Panc1 (cell line): ENCODE measurements at regions of chr19 and their contacts with region 1.

Region 1: DNA sequence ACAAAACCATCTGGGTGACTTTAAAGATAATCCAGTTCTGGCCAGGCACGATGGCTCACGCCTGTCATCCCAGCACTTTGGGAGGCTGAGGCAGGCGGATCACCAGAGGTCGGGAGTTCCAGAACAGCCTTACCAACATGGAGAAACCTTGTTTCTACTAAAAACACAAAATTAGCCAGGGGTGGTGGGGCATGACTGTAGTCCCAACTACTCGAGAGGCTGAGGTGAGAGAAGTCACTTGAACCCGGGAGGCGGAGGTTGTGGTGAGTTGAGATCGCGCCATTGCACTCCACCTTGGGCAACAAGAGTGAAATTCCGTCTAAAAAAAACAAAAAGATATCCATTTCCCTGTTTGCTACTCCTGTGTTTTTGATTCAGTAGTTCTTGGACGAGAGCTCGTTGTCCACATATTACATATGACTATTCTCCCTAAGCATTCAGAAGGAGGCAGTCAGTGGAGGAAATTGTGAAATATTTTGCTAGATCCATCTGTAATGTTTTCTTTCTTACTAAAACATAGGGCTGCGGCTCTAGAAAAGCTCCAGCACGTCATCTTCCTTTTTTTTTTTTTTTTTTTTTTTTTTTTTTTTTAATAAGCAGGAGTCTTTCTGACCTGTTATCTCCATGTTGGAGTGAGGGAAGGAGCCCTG is 33.6 kb downstream of the ZNF701 start:
- DNase-seq: no peak
- ATAC-seq: no peak
- H3K4me3 ChIP-seq: no peak overlapping the region
- H3K27ac ChIP-seq: no peak overlapping the region
- H3K4me1 ChIP-seq: no peaks in the 10 kb centered on the region
- H3K27me3 ChIP-seq: no peaks in the 10 kb centered on the region
- CTCF ChIP-seq: no peak

Region 2: GRCh38 chr19:52507266-52507665 is 96.4 kb before region 1 on chr19:
- CTCF ChIA-PET with region 1: no interaction called
- POLR2A ChIA-PET with region 1: no interaction called
- in situ Hi-C with region 1: no loop called
- intact Hi-C with region 1: no loop called
- DNase-seq: no peak
- ATAC-seq: no peak
- H3K4me3 ChIP-seq: no peak overlapping the region
- H3K27ac ChIP-seq: no peak overlapping the region
- H3K4me1 ChIP-seq: no peaks in the 10 kb centered on the region
- H3K27me3 ChIP-seq: no peaks in the 10 kb centered on the region
- CTCF ChIP-seq: no peak

Region 3: GRCh38 chr19:52570000-52570861 is 33.5 kb before region 1 on chr19 and contains the start of gene ZNF701:
- CTCF ChIA-PET with region 1: no interaction called
- POLR2A ChIA-PET with region 1: no interaction called
- in situ Hi-C with region 1: no loop called
- intact Hi-C with region 1: no loop called
- DNase-seq: peak; percentile 45
- ATAC-seq: peak; percentile 99
- H3K4me3 ChIP-seq: peak within 1 kb of the TSS; percentile 80 to 96
- H3K27ac ChIP-seq: peak within 1 kb of the TSS; percentile 90
- H3K4me1 ChIP-seq: no peaks in the 10 kb centered on the region
- H3K27me3 ChIP-seq: no peaks in the 10 kb centered on the region
- CTCF ChIP-seq: no peak
- total RNA-seq, gene ZNF701: 16.4 TPM

Region 4: GRCh38 chr19:52685796-52686195 is 82.1 kb after region 1 on chr19:
- CTCF ChIA-PET with region 1: no interaction called
- POLR2A ChIA-PET with region 1: interaction called, 15 read pairs
- in situ Hi-C with region 1: no loop called
- intact Hi-C with region 1: no loop called
- DNase-seq: no peak
- ATAC-seq: no peak
- H3K4me3 ChIP-seq: no peak overlapping the region
- H3K27ac ChIP-seq: no peak overlapping the region
- H3K4me1 ChIP-seq: peaks cover 3% of the 10 kb centered on the region; the same call in 1 of the 2 replicates
- H3K27me3 ChIP-seq: no peaks in the 10 kb centered on the region
- CTCF ChIP-seq: no peak